ENCODE measurements at regions of chr14 and their contacts with region 1.

Region 1: DNA sequence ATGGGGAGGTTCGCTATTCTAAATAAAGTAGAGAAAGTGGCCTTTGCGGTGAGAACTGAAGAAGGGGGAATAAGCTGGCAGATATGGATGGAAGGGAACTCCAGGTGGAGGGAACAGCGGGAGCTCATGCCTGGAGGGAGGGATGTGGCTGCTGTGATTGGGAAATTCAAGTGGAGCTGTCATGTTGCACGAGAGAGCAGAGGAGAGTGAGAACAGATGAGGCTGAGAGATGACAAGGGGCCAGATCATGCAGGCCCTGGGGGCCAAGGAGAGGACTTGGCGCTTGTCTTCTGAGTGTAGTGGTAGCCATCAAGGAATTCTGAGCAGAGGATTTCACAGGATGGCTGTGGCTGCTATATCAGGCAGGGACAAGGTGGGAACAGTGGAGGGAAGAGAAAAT is 35.0 kb downstream of the TGFB3 start:
- DNase-seq: no peak
- ATAC-seq: no peak
- H3K4me3 ChIP-seq: no peak overlapping the region
- H3K27ac ChIP-seq: no peak overlapping the region
- H3K4me1 ChIP-seq: no peaks in the 10 kb centered on the region
- H3K27me3 ChIP-seq: no peaks in the 10 kb centered on the region
- CTCF ChIP-seq: no peak

Region 2: GRCh38 chr14:75697918-75698317 is 248.9 kb before region 1 on chr14:
- CTCF ChIA-PET with region 1: no interaction called
- POLR2A ChIA-PET with region 1: interaction called, 14 read pairs
- intact Hi-C with region 1: no loop called
- DNase-seq: no peak
- ATAC-seq: no peak
- H3K4me3 ChIP-seq: no peak overlapping the region
- H3K27ac ChIP-seq: no peak overlapping the region
- H3K4me1 ChIP-seq: no peaks in the 10 kb centered on the region
- H3K27me3 ChIP-seq: no peaks in the 10 kb centered on the region
- CTCF ChIP-seq: no peak

Region 3: GRCh38 chr14:75822522-75823141 is 124.2 kb before region 1 on chr14:
- CTCF ChIA-PET with region 1: no interaction called
- POLR2A ChIA-PET with region 1: no interaction called
- intact Hi-C with region 1: no loop called
- DNase-seq: peak; percentile 81
- ATAC-seq: peak; percentile 80
- H3K4me3 ChIP-seq: no peak overlapping the region; the same call in 1 of the 2 replicates
- H3K27ac ChIP-seq: peak overlapping the region; percentile 97
- H3K4me1 ChIP-seq: peaks cover 52% of the 10 kb centered on the region
- H3K27me3 ChIP-seq: no peaks in the 10 kb centered on the region
- CTCF ChIP-seq: no peak

Measured in PC-3 (cell line).